Left ventricle myocardium inferior (tissue), 1 donor: ENCODE measurements at regions of chr1 and their contacts with region 1.

Region 1: GRCh38 chr1:153568367-153569099 is 2.9 kb upstream of the S100A2 start:
- DNase-seq: peak; percentile 90
- H3K4me3 ChIP-seq: peak overlapping the region; percentile 51
- H3K27ac ChIP-seq: peak overlapping the region; percentile 91
- H3K4me1 ChIP-seq: peaks cover 54% of the 10 kb centered on the region
- H3K27me3 ChIP-seq: no peaks in the 10 kb centered on the region
- CTCF ChIP-seq: no peak

Region 2: GRCh38 chr1:153510984-153511410 is 57.5 kb before region 1 on chr1:
- intact Hi-C with region 1: loop called (anchors 10 kb)
- DNase-seq: peak; percentile 81
- H3K4me3 ChIP-seq: no peak overlapping the region
- H3K27ac ChIP-seq: no peak overlapping the region
- H3K4me1 ChIP-seq: peaks cover 35% of the 10 kb centered on the region
- H3K27me3 ChIP-seq: no peaks in the 10 kb centered on the region
- CTCF ChIP-seq: peak; percentile 95

Region 3: GRCh38 chr1:153532769-153533599 is 35.5 kb before region 1 on chr1:
- intact Hi-C with region 1: loop called (anchors 5 kb)
- DNase-seq: peak; percentile 84
- H3K4me3 ChIP-seq: peak overlapping the region; percentile 93
- H3K27ac ChIP-seq: peak overlapping the region; percentile 98
- H3K4me1 ChIP-seq: peaks cover 50% of the 10 kb centered on the region
- H3K27me3 ChIP-seq: no peaks in the 10 kb centered on the region
- CTCF ChIP-seq: peak; percentile 86

Region 4: GRCh38 chr1:153705485-153705884 is 137.0 kb after region 1 on chr1:
- intact Hi-C with region 1: no loop called
- DNase-seq: no peak
- H3K4me3 ChIP-seq: no peak overlapping the region
- H3K27ac ChIP-seq: no peak overlapping the region
- H3K4me1 ChIP-seq: no peaks in the 10 kb centered on the region
- H3K27me3 ChIP-seq: no peaks in the 10 kb centered on the region
- CTCF ChIP-seq: no peak